AG04450 (cell line): ENCODE measurements at regions of chr9 and their contacts with region 1.

Region 1: GRCh38 chr9:88287972-88288371 is 100.3 kb upstream of the SPIN1 start:
- DNase-seq: no peak
- H3K4me3 ChIP-seq: no peak overlapping the region
- H3K27ac ChIP-seq: no peak overlapping the region
- H3K27me3 ChIP-seq: no peaks in the 10 kb centered on the region
- CTCF ChIP-seq: no peak

Region 2: DNA sequence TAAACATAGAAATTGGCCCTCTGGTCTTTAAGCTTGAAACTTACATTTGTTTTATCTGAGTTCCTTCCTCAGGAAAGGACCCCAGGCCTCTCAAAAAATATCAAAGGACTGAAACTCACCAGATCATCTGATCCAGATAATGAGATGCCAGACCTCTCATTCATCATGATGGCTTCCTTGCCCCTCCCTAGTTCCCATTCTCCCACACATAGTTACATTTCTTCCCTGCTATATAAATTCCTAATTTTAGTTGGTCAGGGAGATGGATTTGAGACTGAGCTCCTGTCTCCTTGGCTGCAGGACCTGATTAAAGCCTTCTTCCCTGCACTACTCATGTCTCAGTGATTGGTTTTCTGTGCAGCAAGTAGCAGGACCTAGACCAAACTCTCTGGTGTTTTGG is 19.1 kb before region 1 on chr9:
- CTCF ChIA-PET with region 1: no interaction called
- POLR2A ChIA-PET with region 1: interaction called, 13 read pairs
- DNase-seq: no peak
- H3K4me3 ChIP-seq: no peak overlapping the region
- H3K27ac ChIP-seq: no peak overlapping the region
- H3K27me3 ChIP-seq: no peaks in the 10 kb centered on the region
- CTCF ChIP-seq: no peak